Ovary (tissue), 10 donors: ENCODE measurements at regions of chr3 and their contacts with region 1.

Region 1: GRCh38 chr3:190197346-190197763 is 76.7 kb upstream of the P3H2 start:
- DNase-seq: no peak
- H3K4me3 ChIP-seq: no peak overlapping the region
- H3K27ac ChIP-seq: no peak overlapping the region
- H3K4me1 ChIP-seq: no peaks in the 10 kb centered on the region
- H3K27me3 ChIP-seq: no peaks in the 10 kb centered on the region
- CTCF ChIP-seq: no peak
- EP300 ChIP-seq: no peak
- POLR2A ChIP-seq: no peak

Region 2: DNA sequence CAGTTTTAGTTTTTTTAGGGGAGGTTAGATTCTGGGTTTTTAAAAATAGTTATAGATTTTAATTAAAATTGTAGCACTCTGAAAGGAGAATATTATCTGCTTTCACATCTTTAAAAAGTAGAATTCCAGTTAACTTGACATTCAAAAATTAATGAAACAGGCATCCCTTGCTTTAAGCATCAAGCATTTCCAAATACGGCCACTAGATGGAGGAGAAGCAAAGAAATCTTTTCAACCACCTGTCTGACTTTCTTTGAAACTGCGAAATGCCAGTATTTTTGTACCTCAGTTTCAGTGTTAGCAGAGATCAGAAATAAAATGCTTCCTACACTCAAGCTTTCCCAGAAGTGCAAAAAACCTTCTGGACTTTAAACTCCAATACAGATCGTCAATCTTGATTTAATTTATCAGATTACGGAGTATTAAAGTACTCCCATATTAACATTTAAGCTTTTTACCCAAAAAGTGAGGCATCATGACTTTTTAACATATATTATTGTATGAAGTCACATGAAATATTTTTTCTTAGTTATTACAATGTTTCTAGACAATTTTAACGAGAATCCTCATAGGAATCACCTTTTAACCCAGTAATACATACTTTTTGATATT is 230.0 kb before region 1 on chr3:
- intact Hi-C with region 1: loop called (anchors 5 kb)
- DNase-seq: no peak
- H3K4me3 ChIP-seq: no peak overlapping the region
- H3K27ac ChIP-seq: no peak overlapping the region
- H3K4me1 ChIP-seq: no peaks in the 10 kb centered on the region
- H3K27me3 ChIP-seq: peaks cover 2% of the 10 kb centered on the region
- CTCF ChIP-seq: peak; percentile 45 to 84 (median 81)
- EP300 ChIP-seq: no peak
- POLR2A ChIP-seq: no peak